Gastrocnemius medialis (tissue), 4 donors: ENCODE measurements at regions of chr10 and their contacts with region 1.

Region 1: DNA sequence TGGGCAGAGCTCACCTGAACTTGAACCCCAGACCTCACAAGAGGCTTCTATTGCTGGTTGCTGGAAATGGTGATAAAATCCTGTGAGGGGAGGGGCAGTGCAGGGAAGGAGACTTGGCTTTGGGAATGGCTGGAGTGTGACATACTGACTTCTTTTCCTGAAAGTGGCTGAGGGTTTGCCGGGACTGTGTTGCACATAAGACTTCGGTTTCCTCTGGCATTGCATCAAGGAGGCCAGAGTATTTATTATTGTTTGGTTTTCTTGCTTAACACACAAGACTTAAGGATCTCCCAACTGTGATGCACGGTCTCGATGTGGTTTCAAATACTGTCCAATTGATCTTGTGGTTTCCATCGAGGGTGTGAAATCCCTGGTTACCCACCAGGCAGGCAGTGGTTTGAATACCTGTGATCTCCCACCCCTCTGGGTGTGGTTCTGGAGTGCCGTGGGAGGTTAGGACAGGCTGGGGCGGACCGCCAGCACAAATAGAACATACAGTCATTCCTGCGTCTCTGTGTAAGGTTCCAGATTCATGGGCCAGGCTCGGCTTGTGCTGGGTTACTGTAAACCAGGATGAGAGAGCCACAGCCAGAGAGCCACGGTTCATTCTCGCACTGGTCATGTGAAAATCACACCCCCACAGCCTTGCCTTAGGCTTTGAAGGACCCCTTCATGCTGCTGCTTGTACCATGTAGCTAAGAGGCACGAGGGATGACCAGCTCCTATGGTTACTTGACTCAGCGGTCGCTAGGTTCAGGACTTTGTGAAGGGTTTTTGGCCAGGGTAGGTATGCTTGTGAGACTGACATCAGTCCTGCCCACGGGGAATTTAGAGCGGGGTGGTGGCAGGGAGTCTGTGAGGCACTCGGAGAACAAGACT is 39.2 kb downstream of the WBP1L start:
- DNase-seq: peak; percentile 91 to 96
- ATAC-seq: peak; percentile 57 to 63
- H3K4me3 ChIP-seq: peak overlapping the region; percentile 28 to 78 (median 54)
- H3K27ac ChIP-seq: peak overlapping the region; percentile 91 to 100 (median 96)
- H3K4me1 ChIP-seq: peaks cover 94 to 97% of the 10 kb centered on the region in 2 donors
- H3K27me3 ChIP-seq: no peaks in the 10 kb centered on the region
- CTCF ChIP-seq: no peak
- POLR2A ChIP-seq: peak in 1 of 2 donors; percentile 56

Region 2: DNA sequence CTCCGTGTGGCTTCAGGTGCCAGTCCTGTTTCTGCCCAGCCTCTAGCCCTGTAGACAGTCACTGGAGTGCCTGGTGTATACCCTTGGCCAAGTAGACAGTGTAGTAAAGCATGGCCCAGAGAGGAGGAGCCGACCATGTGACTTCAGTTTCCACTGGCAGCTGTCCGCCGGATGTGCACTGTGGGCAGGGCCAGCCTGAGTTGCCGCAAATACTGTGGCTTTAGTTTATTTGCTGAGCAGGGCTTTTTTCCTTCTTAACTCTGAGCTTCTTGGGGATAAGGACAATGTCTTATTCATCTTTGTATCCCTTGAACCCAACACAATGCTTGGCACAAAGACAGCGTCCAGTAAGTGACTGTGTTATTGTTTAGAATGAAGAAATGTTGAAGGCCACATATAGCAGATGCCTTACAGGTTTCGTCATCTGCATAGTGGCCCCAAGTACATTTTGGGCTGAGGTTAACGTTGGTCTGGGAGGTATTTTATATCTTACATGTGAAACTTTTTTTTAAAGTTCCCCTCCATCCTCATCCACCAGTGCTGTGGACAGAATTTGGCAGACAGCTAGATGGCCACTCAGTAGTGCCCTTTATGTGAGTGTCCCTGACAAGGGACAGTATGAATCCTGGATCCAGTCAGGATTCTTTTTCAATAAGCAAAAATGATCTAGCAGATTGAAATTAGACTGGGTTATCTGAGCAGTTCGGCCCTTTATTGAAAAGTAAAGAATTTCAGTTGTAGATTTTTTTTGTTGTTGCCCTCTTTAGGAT is 13.7 kb after region 1 on chr10:
- in situ Hi-C with region 1: no loop called
- intact Hi-C with region 1: loop called (anchors 1 kb)
- DNase-seq: peak; percentile 95 to 97
- ATAC-seq: peak; percentile 71 to 82
- H3K4me3 ChIP-seq: peak overlapping the region in 3 of 4 donors; percentile 5 to 30 (median 22)
- H3K27ac ChIP-seq: peak overlapping the region; percentile 91 to 100 (median 96)
- H3K4me1 ChIP-seq: peaks cover 98 to 99% of the 10 kb centered on the region in 2 donors
- H3K27me3 ChIP-seq: no peaks in the 10 kb centered on the region
- CTCF ChIP-seq: no peak
- POLR2A ChIP-seq: peak; percentile 86 to 88